ENCODE measurements at regions of chr17 and their contacts with region 1.

Region 1: GRCh38 chr17:36148559-36149295 is 27.7 kb downstream of the TBC1D3B start:
- DNase-seq: peak; percentile 80
- CTCF ChIP-seq: peak; percentile 99

Region 2: GRCh38 chr17:35947156-35947585 is 201.6 kb before region 1 on chr17:
- CTCF ChIA-PET with region 1: interaction called, 10 read pairs
- POLR2A ChIA-PET with region 1: no interaction called
- DNase-seq: peak; percentile 60
- CTCF ChIP-seq: peak; percentile 90

Region 3: GRCh38 chr17:36117505-36118382 is 31.0 kb before region 1 on chr17:
- CTCF ChIA-PET with region 1: interaction called, 10 read pairs
- POLR2A ChIA-PET with region 1: no interaction called
- DNase-seq: peak; percentile 41
- CTCF ChIP-seq: no peak

Region 4: GRCh38 chr17:36133602-36134236 is 15.0 kb before region 1 on chr17:
- CTCF ChIA-PET with region 1: interaction called, 67 read pairs
- POLR2A ChIA-PET with region 1: no interaction called
- DNase-seq: no peak
- CTCF ChIP-seq: no peak